ENCODE measurements at regions of chr7 and their contacts with region 1.

Region 1: DNA sequence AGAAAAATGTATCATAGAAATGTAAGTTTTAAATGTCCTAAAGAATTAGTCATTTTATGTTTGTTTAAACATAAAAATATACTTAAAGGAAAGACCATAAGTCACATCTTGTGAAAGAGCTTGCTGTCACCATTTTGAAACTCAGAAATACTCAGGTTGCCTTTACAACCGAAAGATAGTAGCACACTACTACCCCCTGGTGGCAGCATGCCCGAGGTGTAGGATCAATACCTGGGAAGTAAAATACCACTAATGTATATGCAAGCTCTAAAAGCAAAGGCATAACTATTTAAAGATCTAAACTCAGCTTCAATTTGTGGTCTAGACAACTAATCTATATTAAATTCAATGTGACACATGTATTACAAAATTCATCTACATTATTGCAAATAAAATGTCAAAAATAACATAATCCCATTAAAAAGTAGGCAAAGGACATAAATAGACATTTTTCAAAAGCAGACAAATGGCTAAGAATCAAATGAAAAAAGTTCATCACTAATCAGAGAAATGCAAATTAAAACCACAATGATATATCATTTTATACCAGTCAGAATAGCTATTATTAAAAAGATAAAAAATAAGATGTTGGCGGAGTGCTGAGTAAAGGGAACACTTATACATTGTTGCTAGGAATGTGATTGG is 47.7 kb upstream of the FGL2 start:
- DNase-seq: no peak
- H3K4me3 ChIP-seq: no peak overlapping the region
- CTCF ChIP-seq: peak; percentile 74

Region 2: GRCh38 chr7:77217474-77218185 is 29.7 kb before region 1 on chr7:
- CTCF ChIA-PET with region 1: interaction called, 10 read pairs
- POLR2A ChIA-PET with region 1: no interaction called
- DNase-seq: no peak
- H3K4me3 ChIP-seq: no peak overlapping the region
- CTCF ChIP-seq: no peak

Region 3: DNA sequence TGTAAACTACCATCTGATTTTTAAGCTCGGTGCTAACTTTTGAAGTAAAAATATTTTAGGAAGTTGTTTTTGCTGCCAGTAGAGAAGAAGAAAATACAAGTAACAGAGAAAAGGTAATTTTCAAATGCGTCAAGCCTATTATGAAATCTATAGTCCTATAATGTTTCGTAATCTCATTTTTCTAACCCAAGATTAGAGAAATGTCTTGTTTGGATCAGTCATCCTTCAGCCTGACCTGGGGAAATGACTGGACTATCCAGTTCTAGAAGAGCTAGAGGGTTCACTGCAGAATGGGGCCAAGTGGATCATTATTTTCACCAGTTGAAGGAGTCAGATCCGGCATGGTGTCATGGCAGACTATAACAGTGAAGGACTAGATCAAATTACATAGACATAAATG is 15.0 kb after region 1 on chr7:
- CTCF ChIA-PET with region 1: interaction called, 12 read pairs
- POLR2A ChIA-PET with region 1: no interaction called
- DNase-seq: no peak
- H3K4me3 ChIP-seq: no peak overlapping the region
- CTCF ChIP-seq: no peak

Region 4: GRCh38 chr7:77269360-77270093 is 22.2 kb after region 1 on chr7:
- CTCF ChIA-PET with region 1: interaction called, 12 read pairs
- POLR2A ChIA-PET with region 1: no interaction called
- DNase-seq: no peak
- H3K4me3 ChIP-seq: no peak overlapping the region
- CTCF ChIP-seq: no peak

Region 5: DNA sequence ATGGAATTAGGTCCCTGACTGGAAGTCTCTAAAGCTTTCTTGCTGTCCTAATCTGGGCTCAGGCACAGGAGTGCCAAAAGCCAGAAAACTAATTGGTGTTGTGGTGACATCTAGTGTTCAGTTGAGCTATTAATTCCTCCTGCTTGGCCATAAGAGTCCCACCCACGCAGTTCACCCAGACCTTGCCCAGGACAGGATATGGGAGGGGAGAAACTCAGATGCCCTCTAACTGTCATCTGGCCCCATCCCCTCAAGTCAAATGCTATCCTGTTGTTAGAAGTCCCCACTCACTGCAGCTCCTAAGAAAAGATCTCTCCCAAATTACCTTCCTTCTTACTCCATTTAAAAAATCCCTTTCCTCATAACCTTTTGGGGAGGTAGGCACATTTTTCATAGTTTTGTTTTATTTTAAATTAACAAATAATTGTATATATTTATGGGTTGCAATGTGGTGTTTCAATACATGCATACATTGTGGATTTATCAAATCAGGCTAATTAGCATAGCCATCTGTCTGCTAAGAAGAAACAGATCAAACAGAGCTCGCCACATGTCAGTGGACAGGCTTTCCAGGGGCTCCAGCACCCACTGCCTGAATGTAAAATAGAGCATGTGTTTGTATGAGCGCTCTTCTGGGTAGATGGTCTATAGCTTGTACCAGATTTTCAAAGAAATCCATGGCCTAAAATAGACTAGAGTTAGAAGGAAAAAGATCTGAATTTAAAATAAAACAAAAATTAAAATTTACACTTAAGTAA is 84.8 kb after region 1 on chr7:
- CTCF ChIA-PET with region 1: interaction called, 24 read pairs
- POLR2A ChIA-PET with region 1: no interaction called
- DNase-seq: peak; percentile 40
- H3K4me3 ChIP-seq: no peak overlapping the region
- CTCF ChIP-seq: peak; percentile 47

Region 6: GRCh38 chr7:77501192-77501515 is 253.8 kb after region 1 on chr7:
- CTCF ChIA-PET with region 1: no interaction called
- POLR2A ChIA-PET with region 1: no interaction called
- DNase-seq: no peak
- H3K4me3 ChIP-seq: no peak overlapping the region
- CTCF ChIP-seq: no peak